ENCODE measurements at regions of chr7 and their contacts with region 1.

Region 1: GRCh38 chr7:134632937-134633540 is 13.6 kb upstream of the BPGM start:
- DNase-seq: peak in 6 of 9 experiments; percentile 26 to 81 (median 46)
- ATAC-seq: peak; percentile 96
- H3K4me3 ChIP-seq: no peak overlapping the region
- H3K4me3 Mint-ChIP-seq: no peak overlapping the region
- H3K27ac ChIP-seq: no peak overlapping the region
- H3K27ac Mint-ChIP-seq: no peak overlapping the region
- H3K4me1 ChIP-seq: peaks cover 6% of the 10 kb centered on the region
- H3K4me1 Mint-ChIP-seq: peaks cover 18% of the 10 kb centered on the region
- H3K27me3 ChIP-seq: peaks cover 0 to 3% of the 10 kb centered on the region in 2 experiments
- H3K27me3 Mint-ChIP-seq: peaks cover 12% of the 10 kb centered on the region
- CTCF ChIP-seq: peak; percentile 72

Region 2: DNA sequence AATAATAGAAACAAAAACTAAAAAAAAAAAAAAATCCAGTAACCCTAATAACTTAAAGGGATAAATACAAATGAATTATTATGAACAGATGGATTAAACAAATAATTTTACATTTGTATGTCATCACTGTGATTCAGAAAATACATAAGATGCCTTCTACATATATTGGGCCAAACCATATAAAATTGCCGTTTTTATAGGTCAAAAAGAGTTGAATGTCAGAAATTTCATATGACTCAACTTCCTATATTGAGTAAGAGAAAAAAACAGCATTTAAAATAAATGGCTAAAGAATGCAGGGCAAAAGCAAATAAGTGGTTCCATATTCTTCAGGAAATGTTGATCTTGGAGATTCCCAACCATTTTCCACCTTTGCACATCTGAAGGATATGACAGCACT is 325.7 kb before region 1 on chr7:
- CTCF ChIA-PET with region 1: no interaction called
- POLR2A ChIA-PET with region 1: no interaction called
- intact Hi-C with region 1: no loop called
- DNase-seq: no peak
- ATAC-seq: no peak
- H3K4me3 ChIP-seq: no peak overlapping the region
- H3K4me3 Mint-ChIP-seq: no peak overlapping the region
- H3K27ac ChIP-seq: no peak overlapping the region
- H3K27ac Mint-ChIP-seq: no peak overlapping the region
- H3K4me1 ChIP-seq: no peaks in the 10 kb centered on the region
- H3K4me1 Mint-ChIP-seq: peaks cover 10% of the 10 kb centered on the region
- H3K27me3 ChIP-seq: no peaks in the 10 kb centered on the region
- H3K27me3 Mint-ChIP-seq: no peaks in the 10 kb centered on the region
- CTCF ChIP-seq: no peak

Region 3: DNA sequence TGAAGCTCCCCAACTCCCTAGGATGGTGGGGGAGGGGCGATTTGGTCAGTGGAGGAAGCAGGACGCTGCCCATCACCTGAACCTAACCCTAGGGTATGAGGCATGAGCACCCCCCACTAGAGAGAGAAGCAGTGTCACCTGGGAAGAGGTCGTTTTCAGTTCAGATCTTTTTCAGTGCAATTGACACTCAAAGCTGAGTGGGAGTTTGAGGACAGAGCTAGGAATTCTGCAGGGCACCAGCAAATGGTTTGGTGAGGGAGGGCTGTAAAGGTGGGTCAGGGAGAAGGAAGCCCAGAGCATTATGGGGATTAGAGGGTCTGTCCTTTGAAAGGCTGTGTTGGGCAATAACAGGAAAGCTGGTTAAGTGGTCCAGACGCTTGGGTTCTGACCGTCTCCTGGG is 24.5 kb after region 1 on chr7:
- CTCF ChIA-PET with region 1: interaction called, 12 read pairs
- POLR2A ChIA-PET with region 1: interaction called, 3 read pairs
- intact Hi-C with region 1: no loop called
- DNase-seq: no peak
- ATAC-seq: no peak
- H3K4me3 ChIP-seq: no peak overlapping the region
- H3K4me3 Mint-ChIP-seq: no peak overlapping the region
- H3K27ac ChIP-seq: no peak overlapping the region
- H3K27ac Mint-ChIP-seq: no peak overlapping the region
- H3K4me1 ChIP-seq: no peaks in the 10 kb centered on the region
- H3K4me1 Mint-ChIP-seq: peaks cover 34% of the 10 kb centered on the region
- H3K27me3 ChIP-seq: no peaks in the 10 kb centered on the region
- H3K27me3 Mint-ChIP-seq: no peaks in the 10 kb centered on the region
- CTCF ChIP-seq: no peak

Region 4: DNA sequence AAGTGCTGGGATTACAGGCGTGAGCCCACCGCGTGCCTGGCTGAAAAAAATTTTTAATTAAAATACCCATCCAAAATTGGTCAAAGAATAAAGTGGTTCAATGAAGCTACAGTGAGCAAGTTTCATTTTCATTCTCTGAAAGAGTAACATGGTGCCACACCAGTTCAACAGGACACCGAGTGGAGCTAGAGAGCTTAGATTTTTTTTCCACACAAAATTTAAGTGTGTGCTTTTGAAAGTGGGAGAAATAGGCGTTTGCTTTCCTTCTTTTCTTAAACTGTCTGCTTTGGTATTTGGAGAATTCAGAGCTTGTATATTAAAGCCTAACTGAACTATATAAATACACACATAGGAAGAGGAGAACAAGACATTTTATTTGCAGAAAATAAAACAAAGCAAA is 57.0 kb after region 1 on chr7:
- CTCF ChIA-PET with region 1: interaction called, 31 read pairs
- POLR2A ChIA-PET with region 1: no interaction called
- intact Hi-C with region 1: no loop called
- DNase-seq: no peak
- ATAC-seq: no peak
- H3K4me3 ChIP-seq: no peak overlapping the region
- H3K4me3 Mint-ChIP-seq: no peak overlapping the region
- H3K27ac ChIP-seq: no peak overlapping the region
- H3K27ac Mint-ChIP-seq: no peak overlapping the region
- H3K4me1 ChIP-seq: peaks cover 4% of the 10 kb centered on the region
- H3K4me1 Mint-ChIP-seq: peaks cover 9% of the 10 kb centered on the region
- H3K27me3 ChIP-seq: no peaks in the 10 kb centered on the region
- H3K27me3 Mint-ChIP-seq: peaks cover 13% of the 10 kb centered on the region
- CTCF ChIP-seq: no peak

Region 5: GRCh38 chr7:134710859-134711624 is 78.0 kb after region 1 on chr7:
- CTCF ChIA-PET with region 1: interaction called, 21 read pairs
- POLR2A ChIA-PET with region 1: no interaction called
- intact Hi-C with region 1: no loop called
- DNase-seq: peak; percentile 20 to 89 (median 63)
- ATAC-seq: peak; percentile 94
- H3K4me3 ChIP-seq: peak overlapping the region in 1 of 2 experiments; percentile 13
- H3K4me3 Mint-ChIP-seq: peak overlapping the region; percentile 6
- H3K27ac ChIP-seq: peak overlapping the region; percentile 50 to 62
- H3K27ac Mint-ChIP-seq: peak overlapping the region; percentile 91
- H3K4me1 ChIP-seq: peaks cover 16% of the 10 kb centered on the region
- H3K4me1 Mint-ChIP-seq: peaks cover 18% of the 10 kb centered on the region
- H3K27me3 ChIP-seq: no peaks in the 10 kb centered on the region
- H3K27me3 Mint-ChIP-seq: no peaks in the 10 kb centered on the region
- CTCF ChIP-seq: no peak

Region 6: DNA sequence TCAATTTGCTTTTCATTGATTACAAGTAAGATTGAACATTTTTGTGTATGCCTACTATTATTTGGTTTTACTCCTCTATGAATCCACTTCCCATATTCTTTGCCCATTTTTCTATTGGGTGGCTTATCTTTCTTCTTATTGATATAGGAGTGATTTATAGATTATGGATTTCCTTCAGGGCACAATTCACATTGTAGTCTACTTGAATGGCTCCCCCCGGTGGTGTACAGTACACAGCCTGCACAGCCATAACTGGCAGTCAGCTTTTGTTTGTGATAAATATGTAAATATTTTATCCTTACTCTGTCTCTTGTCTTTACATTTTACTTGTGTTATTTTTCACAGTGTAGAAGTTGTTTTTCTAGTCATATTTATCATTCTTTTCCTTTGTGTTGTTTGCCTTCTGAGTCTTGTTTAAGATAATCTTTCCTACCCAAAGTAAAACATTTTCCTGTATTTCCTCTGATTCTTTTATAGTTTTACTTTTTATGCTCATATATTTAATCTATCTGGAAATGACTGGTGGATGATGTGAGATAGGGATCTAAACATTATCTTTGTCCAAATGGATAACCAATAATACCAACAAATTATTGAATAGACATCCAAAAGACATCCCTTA is 122.5 kb after region 1 on chr7:
- CTCF ChIA-PET with region 1: interaction called, 63 read pairs
- POLR2A ChIA-PET with region 1: no interaction called
- intact Hi-C with region 1: loop called (anchors 1 kb)
- DNase-seq: peak in 6 of 9 experiments; percentile 19 to 44 (median 37)
- ATAC-seq: no peak
- H3K4me3 ChIP-seq: no peak overlapping the region
- H3K4me3 Mint-ChIP-seq: no peak overlapping the region
- H3K27ac ChIP-seq: no peak overlapping the region
- H3K27ac Mint-ChIP-seq: no peak overlapping the region
- H3K4me1 ChIP-seq: no peaks in the 10 kb centered on the region
- H3K4me1 Mint-ChIP-seq: no peaks in the 10 kb centered on the region
- H3K27me3 ChIP-seq: no peaks in the 10 kb centered on the region
- H3K27me3 Mint-ChIP-seq: no peaks in the 10 kb centered on the region
- CTCF ChIP-seq: peak; percentile 54

Region 7: DNA sequence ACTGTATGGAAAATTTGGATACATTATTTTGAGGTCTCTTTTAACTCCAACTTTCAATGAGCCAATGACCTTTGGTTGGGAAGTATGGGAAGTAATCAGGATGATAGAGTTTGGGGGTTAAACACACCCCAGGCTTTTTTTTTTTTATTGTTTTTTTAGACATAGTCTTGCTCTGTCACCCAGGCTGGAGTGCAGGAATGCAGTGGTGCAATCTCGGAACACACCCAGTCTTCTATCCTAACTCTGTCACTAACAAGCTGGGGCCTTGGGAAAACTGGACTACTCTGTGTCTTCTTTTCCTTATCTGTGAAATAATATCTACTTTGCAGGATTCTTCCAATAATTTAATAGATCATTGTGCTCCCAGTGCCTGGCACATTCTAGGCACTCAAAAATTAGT is 315.7 kb after region 1 on chr7:
- CTCF ChIA-PET with region 1: interaction called, 40 read pairs
- POLR2A ChIA-PET with region 1: interaction called, 4 read pairs
- intact Hi-C with region 1: no loop called
- DNase-seq: no peak
- ATAC-seq: no peak
- H3K4me3 ChIP-seq: no peak overlapping the region
- H3K4me3 Mint-ChIP-seq: no peak overlapping the region
- H3K27ac ChIP-seq: no peak overlapping the region
- H3K27ac Mint-ChIP-seq: no peak overlapping the region
- H3K4me1 ChIP-seq: peaks cover 10% of the 10 kb centered on the region
- H3K4me1 Mint-ChIP-seq: peaks cover 14% of the 10 kb centered on the region
- H3K27me3 ChIP-seq: no peaks in the 10 kb centered on the region
- H3K27me3 Mint-ChIP-seq: peaks cover 2% of the 10 kb centered on the region
- CTCF ChIP-seq: no peak

Region 8: DNA sequence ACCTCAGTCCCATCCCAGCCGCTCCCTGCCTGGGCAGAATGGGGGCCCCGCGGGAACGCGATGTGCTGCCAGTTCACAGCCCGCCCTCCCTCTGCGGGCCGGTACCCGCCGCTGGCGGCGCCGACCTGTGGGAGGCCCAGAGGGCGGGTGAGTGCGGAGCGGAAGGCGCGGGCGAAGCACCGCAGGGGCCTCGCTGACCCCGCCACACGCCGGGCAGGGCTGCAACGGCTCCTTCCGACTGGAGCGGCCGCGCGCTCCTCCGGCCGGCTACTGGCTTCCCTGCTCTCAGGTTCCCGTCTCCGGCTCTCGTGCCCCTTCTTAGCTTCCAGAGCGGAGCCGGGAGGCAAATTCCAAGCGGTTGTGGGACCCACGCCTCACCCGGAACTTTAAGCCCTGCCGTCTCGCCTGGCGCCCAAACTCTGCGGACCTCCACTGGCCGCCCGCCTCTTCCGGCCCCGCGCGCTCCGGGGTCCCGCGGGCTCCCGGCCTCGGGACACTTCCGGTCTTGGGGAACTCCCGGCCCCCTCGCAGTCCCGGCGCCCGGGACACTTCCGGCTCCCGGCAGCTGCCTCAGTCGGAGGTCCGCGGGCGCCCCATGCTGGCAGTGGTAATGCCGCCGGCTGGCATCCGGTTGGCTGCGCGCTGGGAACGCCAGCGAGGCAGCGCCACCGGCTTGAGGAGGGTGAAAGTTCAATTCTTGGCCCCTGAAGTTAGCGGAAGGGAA is 537.4 kb after region 1 on chr7 and contains the start of gene CYREN:
- CTCF ChIA-PET with region 1: interaction called, 16 read pairs
- POLR2A ChIA-PET with region 1: interaction called, 3 read pairs
- intact Hi-C with region 1: loop called (anchors 1 to 2 kb)
- DNase-seq: peak; percentile 75 to 95 (median 91)
- ATAC-seq: peak; percentile 75
- H3K4me3 ChIP-seq: peak within 1 kb of the TSS; percentile 89 to 92
- H3K4me3 Mint-ChIP-seq: peak within 1 kb of the TSS; percentile 84
- H3K27ac ChIP-seq: peak within 1 kb of the TSS; percentile 94 to 98
- H3K27ac Mint-ChIP-seq: peak within 1 kb of the TSS; percentile 97
- H3K4me1 ChIP-seq: peaks cover 38% of the 10 kb centered on the region
- H3K4me1 Mint-ChIP-seq: peaks cover 47% of the 10 kb centered on the region
- H3K27me3 ChIP-seq: no peaks in the 10 kb centered on the region
- H3K27me3 Mint-ChIP-seq: no peaks in the 10 kb centered on the region
- CTCF ChIP-seq: peak; percentile 71
- total RNA-seq, gene CYREN: 14.0 to 15.2 TPM